Activated CD8-positive, alpha-beta memory T cell treated with anti-CD3 and anti-CD28 coated beads, Interleukin-2, amount 10 ng/mL, durations not matched to agents 7 days and 5 days (primary cell): ENCODE measurements at regions of chr9 and their contacts with region 1.

Region 1: DNA sequence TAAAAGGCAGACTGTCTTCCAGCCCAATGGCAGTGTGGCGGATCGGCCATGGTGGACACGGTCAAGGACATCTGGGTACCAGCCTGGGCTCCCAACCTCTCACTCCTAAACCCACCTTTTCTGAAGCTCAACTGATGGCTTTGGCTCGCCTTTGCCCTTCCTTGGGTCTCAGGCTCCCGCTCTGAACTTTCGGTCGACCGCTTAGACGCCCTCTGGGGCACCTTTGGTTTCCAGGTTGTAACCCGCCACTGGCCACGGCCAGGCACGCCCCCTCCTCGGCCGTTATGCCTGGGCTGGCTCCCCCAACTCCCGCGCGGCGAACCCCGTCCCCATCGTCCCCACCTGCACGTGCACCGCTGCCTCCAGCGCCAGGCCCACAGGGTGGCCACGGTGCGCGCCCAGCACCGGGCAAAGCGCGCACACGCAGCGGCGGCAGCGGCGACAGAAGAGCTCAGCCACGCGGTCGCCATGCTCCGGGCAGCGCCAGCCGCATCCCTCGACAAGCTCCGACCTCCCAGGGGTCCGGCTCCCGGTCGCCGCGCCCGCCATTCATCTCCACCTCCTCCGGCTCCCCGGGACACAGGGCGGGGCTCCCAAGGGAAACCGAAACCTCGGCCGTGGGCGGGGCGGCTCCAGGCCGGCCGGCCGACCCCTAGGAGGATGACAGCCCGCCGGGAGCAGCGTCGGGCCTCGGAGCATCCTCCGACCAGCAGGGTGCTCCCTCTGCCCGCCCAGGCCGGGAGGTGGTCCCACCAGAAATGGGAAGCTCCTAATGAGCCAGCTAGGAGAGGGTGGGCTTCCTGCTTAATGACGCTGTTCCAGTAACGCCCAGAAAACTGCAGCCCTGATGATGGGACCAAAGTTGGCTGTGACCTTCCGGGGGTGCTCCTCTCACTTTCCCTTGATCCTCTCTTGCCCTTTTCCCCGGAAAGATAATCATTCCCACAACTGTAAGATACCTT is at the start of gene TRIM14:
- DNase-seq: peak; percentile 82
- ATAC-seq: peak; percentile 82
- H3K4me3 Mint-ChIP-seq: peak within 1 kb of the TSS; percentile 82
- H3K27ac Mint-ChIP-seq: peak within 1 kb of the TSS; percentile 91
- H3K4me1 Mint-ChIP-seq: peaks cover 45% of the 10 kb centered on the region
- H3K27me3 Mint-ChIP-seq: no peaks in the 10 kb centered on the region
- total RNA-seq, gene TRIM14: 84.6 to 128 TPM

Region 2: DNA sequence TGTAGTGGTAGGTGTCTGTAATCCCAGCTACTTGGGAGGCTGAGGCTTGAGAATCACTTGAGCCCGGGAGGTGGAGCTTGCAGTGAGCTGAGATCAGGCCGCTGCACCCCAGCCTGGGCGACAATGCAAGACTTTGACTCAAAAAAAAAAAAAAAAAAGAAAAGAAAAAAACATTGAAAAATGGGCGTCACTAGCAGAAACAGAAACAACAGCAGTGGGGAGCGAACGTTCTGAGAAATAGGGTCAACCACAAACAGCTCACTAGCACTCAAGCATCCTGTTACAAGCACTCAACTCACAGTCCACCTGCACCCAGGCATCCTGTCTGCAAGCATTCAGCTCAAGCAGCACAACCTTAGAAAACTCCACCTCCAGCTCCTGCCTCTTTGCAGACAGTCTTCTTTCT is 17.1 kb before region 1 on chr9:
- CTCF ChIA-PET with region 1: interaction called, 26 read pairs
- DNase-seq: peak; percentile 94
- ATAC-seq: peak; percentile 98
- H3K4me3 Mint-ChIP-seq: peak overlapping the region; percentile 77
- H3K27ac Mint-ChIP-seq: peak overlapping the region; percentile 99
- H3K4me1 Mint-ChIP-seq: peaks cover 88% of the 10 kb centered on the region
- H3K27me3 Mint-ChIP-seq: no peaks in the 10 kb centered on the region

Region 3: GRCh38 chr9:98192503-98193335 is 73.8 kb after region 1 on chr9 and contains the start of gene CORO2A:
- CTCF ChIA-PET with region 1: interaction called, 42 read pairs
- DNase-seq: peak; percentile 80
- ATAC-seq: peak; percentile 88
- H3K4me3 Mint-ChIP-seq: peak within 1 kb of the TSS; percentile 79
- H3K27ac Mint-ChIP-seq: peak within 1 kb of the TSS; percentile 71
- H3K4me1 Mint-ChIP-seq: peaks cover 11% of the 10 kb centered on the region
- H3K27me3 Mint-ChIP-seq: no peaks in the 10 kb centered on the region
- total RNA-seq, gene CORO2A: 6.2 to 11.5 TPM

Region 4: DNA sequence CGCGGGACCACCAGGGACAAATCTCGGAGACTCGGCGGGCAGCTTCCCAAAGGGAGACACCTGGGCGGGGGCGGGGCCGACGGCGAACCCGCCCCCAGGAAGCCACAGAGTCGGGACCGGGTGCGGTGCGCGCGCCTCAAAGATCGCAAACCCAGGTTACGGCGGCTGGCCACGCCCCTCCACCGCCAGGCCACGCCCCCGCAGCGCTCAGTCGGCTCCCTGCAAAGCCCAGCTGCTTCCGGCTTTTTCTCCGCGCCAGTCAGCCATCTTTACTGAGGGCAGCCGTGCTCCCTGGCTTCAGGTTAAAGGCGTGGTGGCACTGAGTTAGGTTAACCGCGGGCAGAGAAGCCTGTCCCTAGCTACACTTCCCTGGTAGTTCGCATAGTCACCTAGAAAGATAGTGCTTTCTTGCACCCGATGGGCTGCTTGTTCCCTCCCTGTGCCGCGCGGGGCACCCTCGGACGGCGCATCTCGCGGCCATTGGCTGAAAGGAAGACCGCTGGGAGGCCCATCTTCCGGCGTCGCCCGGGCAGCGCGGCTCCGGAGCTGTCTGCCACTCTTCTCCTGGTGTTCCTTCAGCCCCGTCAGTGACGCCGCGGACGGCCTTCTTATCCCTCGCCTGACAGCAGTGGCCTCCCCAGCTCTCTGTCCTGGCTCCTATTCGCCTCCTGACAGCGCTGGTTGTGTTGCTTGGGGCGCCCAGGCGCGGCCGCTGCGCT is 136.8 kb after region 1 on chr9 and contains the start of gene TBC1D2:
- CTCF ChIA-PET with region 1: interaction called, 49 read pairs
- DNase-seq: peak; percentile 98
- ATAC-seq: peak; percentile 88
- H3K4me3 Mint-ChIP-seq: peak within 1 kb of the TSS; percentile 82
- H3K27ac Mint-ChIP-seq: peak within 1 kb of the TSS; percentile 98
- H3K4me1 Mint-ChIP-seq: peaks cover 20% of the 10 kb centered on the region
- H3K27me3 Mint-ChIP-seq: peaks cover 7% of the 10 kb centered on the region
- total RNA-seq, gene TBC1D2: 2.7 to 5.0 TPM